ENCODE measurements at regions of chr13 and their contacts with region 1.

Region 1: DNA sequence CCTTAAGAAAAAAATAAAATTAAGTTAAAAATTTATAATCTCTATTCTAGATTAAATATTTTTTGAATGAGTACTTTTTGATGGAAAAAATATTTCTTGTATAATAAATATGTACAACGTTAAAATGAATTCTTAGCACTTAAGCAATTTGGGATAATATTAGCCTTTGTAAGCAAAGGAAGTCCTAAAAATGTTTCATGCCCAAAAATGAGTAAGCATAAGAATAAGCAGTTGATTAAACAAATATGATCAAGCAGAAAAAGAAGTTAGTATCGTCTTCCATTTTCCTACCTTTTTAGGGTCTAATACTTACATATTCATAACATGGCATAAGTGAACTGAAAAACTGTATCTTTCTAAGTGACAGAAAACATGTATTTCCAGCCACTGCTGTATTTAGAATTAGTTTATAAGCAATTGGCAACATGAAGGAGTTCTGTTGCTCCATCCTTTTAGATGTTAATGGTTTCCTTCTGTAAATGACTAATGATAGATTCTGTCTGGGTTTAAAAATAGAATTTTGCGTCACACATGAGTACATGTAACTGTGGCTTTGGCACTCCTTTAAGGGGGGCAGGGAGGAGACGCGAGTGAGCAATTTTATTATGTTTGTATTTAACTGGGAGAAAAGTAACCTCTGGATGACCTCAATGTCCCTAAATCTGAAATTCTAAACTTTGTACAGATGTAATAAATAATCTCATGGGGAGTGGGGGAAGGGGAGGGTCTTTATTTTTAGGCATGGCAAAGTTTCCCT is 237.4 kb downstream of the RGCC start:
- DNase-seq: peak; percentile 93
- H3K4me3 ChIP-seq: peak overlapping the region in 1 of 3 experiments; percentile 30
- H3K27ac ChIP-seq: peak overlapping the region; percentile 88
- H3K4me1 ChIP-seq: peaks cover 34% of the 10 kb centered on the region
- H3K27me3 ChIP-seq: no peaks in the 10 kb centered on the region
- CTCF ChIP-seq: no peak
- POLR2A ChIP-seq: no peak

Region 2: GRCh38 chr13:41788552-41788951 is 93.8 kb after region 1 on chr13:
- CTCF ChIA-PET with region 1: no interaction called
- POLR2A ChIA-PET with region 1: no interaction called
- dilution Hi-C with region 1: no loop called
- intact Hi-C with region 1: loop called (anchors 1 kb)
- DNase-seq: peak; percentile 96
- H3K4me3 ChIP-seq: no peak overlapping the region
- H3K27ac ChIP-seq: peak overlapping the region; percentile 66
- H3K4me1 ChIP-seq: peaks cover 8% of the 10 kb centered on the region
- H3K27me3 ChIP-seq: no peaks in the 10 kb centered on the region
- CTCF ChIP-seq: no peak
- POLR2A ChIP-seq: no peak

Region 3: GRCh38 chr13:41835871-41836270 is 141.1 kb after region 1 on chr13:
- CTCF ChIA-PET with region 1: no interaction called
- POLR2A ChIA-PET with region 1: no interaction called
- dilution Hi-C with region 1: no loop called
- intact Hi-C with region 1: loop called (anchors 2 kb)
- DNase-seq: no peak
- H3K4me3 ChIP-seq: no peak overlapping the region
- H3K27ac ChIP-seq: no peak overlapping the region
- H3K4me1 ChIP-seq: peaks cover 23% of the 10 kb centered on the region
- H3K27me3 ChIP-seq: no peaks in the 10 kb centered on the region
- CTCF ChIP-seq: no peak
- POLR2A ChIP-seq: no peak

Region 4: GRCh38 chr13:42174344-42175162 is 479.8 kb after region 1 on chr13:
- CTCF ChIA-PET with region 1: no interaction called
- POLR2A ChIA-PET with region 1: no interaction called
- dilution Hi-C with region 1: no loop called
- intact Hi-C with region 1: no loop called
- DNase-seq: peak; percentile 2
- H3K4me3 ChIP-seq: no peak overlapping the region
- H3K27ac ChIP-seq: no peak overlapping the region
- H3K4me1 ChIP-seq: peaks cover 8% of the 10 kb centered on the region
- H3K27me3 ChIP-seq: no peaks in the 10 kb centered on the region
- CTCF ChIP-seq: no peak
- POLR2A ChIP-seq: no peak